ENCODE measurements at regions of chr1 and their contacts with region 1.

Region 1: DNA sequence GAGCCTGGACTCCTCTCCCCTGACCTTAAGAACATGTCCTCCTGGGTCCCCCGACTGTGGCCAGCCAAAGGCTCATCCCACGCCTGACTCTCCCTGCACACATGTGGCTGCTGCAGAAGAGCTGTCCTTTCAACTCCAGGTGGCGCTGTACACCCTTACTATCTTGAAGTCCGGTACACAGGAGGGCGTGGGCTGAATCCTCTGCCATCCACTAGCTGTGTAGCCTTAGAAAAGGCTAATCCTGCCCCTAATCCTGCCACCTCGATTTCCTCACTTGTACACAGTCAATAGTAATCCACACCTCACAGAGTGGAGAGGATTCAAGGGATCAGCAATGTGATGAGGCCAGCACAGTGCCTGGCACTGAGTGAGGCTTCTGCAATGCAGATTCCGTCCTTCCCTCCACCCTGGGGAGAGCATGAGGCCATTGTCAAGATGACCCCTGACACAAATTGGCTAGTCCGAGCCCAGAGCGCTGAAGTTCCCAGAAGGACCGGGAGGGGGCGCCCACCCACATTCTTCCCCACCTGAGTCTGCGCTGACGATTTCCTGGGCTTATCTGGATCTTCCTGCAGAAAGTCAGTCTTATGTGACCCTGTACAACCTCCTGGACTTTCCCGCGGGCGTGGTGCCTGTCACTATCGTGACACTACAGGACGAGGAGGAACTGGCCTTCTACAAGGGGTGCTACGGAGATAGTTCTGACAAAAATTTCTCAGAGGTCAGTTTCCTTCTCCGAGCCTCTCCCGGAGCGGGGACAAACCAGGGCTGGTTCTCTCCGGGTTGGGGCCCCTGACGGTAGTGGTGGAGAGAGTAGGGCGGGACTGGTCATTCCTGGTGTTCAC is 47.1 kb upstream of the DMBX1 start:
- DNase-seq: peak in 34 of 35 experiments; percentile 27 to 78 (median 53)
- ATAC-seq: peak; percentile 67 to 82 (median 72)
- H3K4me3 ChIP-seq: peak overlapping the region; percentile 44 to 61
- H3K4me3 Mint-ChIP-seq: peak overlapping the region; percentile 81 to 83 (median 82)
- H3K27ac ChIP-seq: no peak overlapping the region
- H3K27ac Mint-ChIP-seq: peak overlapping the region; percentile 9 to 31
- H3K4me1 ChIP-seq: peaks cover 0 to 17% of the 10 kb centered on the region in 2 experiments
- H3K4me1 Mint-ChIP-seq: peaks cover 16 to 24% (median 17%) of the 10 kb centered on the region in 3 donors
- H3K27me3 ChIP-seq: peaks cover 8 to 35% of the 10 kb centered on the region in 2 experiments
- H3K27me3 Mint-ChIP-seq: peaks cover 22 to 24% of the 10 kb centered on the region in 2 donors

Region 2: GRCh38 chr1:46529031-46529630 is 86.6 kb after region 1 on chr1:
- CTCF ChIA-PET with region 1: interaction called, 9 to 11 read pairs
- POLR2A ChIA-PET with region 1: no interaction called
- DNase-seq: no peak
- ATAC-seq: no peak
- H3K4me3 ChIP-seq: no peak overlapping the region
- H3K4me3 Mint-ChIP-seq: no peak overlapping the region
- H3K27ac ChIP-seq: no peak overlapping the region
- H3K27ac Mint-ChIP-seq: peak overlapping the region in 1 of 2 donors; percentile 29
- H3K4me1 ChIP-seq: peaks cover 0 to 14% of the 10 kb centered on the region in 2 experiments
- H3K4me1 Mint-ChIP-seq: peaks cover 4 to 21% (median 6%) of the 10 kb centered on the region in 3 donors
- H3K27me3 ChIP-seq: peaks cover 7 to 57% of the 10 kb centered on the region in 2 experiments
- H3K27me3 Mint-ChIP-seq: peaks cover 33 to 44% of the 10 kb centered on the region in 2 donors

Region 3: GRCh38 chr1:46539972-46540371 is 97.4 kb after region 1 on chr1:
- CTCF ChIA-PET with region 1: interaction called in 1 of 2 experiments, 12 read pairs
- POLR2A ChIA-PET with region 1: no interaction called
- DNase-seq: no peak
- ATAC-seq: no peak
- H3K4me3 ChIP-seq: no peak overlapping the region
- H3K4me3 Mint-ChIP-seq: no peak overlapping the region
- H3K27ac ChIP-seq: no peak overlapping the region
- H3K27ac Mint-ChIP-seq: no peak overlapping the region
- H3K4me1 ChIP-seq: peaks cover 0 to 4% of the 10 kb centered on the region in 2 experiments
- H3K4me1 Mint-ChIP-seq: peaks cover 0 to 6% (median 2%) of the 10 kb centered on the region in 3 donors
- H3K27me3 ChIP-seq: peaks cover 9 to 48% of the 10 kb centered on the region in 2 experiments
- H3K27me3 Mint-ChIP-seq: peaks cover 25 to 44% of the 10 kb centered on the region in 2 donors